Right ventricle myocardium inferior (tissue), 1 donor: ENCODE measurements at regions of chr6 and their contacts with region 1.

Region 1: DNA sequence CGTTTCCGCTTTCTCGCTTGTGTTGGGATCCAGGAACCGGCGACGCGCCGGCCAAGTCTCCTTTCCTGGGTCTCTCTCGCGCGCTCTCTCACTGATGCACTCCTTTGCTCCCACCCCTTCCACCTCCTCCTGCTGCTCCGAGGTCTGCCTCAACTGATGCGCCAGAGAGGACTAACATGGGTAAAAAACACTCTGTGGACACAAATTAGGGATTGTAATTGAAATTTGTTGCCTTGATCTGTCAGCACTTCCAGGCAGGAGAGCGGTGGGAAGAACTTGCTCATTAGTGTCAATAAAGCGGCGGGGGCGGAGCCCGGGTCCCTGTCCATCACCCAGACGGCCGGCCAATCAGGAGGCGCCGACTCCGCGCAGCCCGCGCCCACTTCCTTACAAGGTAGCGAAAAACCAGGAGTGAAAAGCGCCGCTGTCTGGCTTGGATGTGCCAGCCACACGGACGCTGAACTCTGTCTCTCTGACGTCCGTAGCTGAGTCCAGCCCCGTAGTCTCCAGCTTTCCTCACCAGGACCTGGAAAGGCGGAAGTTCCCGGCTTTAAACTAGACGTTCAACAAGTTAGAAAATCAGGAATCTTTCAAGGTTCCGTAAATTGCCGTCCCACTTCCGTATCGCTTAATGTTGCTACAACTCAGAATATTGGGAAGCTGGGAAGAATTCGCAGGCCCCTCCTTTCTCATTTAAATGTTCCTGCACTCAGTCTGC is at the start of gene TBX18:
- DNase-seq: peak; percentile 95
- ATAC-seq: peak; percentile 92
- total RNA-seq, gene TBX18: 8.4 TPM

Region 2: DNA sequence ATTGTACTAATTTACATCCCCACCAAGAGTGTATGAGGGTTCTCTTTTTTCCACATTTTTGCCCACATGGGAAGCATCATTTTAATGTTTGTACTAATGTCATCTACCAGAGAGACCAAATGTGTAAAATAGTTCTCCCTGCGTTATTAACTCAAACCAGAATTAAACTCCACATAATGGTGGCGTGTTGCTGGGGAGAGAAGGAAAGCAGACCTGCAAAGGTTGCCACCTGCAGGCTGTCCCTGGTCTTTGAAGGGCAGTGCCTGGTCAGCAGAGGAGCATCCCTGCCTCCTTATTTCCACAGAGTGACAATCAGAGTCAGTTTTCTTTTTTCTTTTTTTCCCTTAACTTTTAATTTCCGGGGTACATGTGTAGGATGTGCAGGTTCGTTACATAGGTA is 214.6 kb before region 1 on chr6:
- intact Hi-C with region 1: loop called (anchors 10 kb)
- DNase-seq: no peak
- ATAC-seq: no peak

Region 3: DNA sequence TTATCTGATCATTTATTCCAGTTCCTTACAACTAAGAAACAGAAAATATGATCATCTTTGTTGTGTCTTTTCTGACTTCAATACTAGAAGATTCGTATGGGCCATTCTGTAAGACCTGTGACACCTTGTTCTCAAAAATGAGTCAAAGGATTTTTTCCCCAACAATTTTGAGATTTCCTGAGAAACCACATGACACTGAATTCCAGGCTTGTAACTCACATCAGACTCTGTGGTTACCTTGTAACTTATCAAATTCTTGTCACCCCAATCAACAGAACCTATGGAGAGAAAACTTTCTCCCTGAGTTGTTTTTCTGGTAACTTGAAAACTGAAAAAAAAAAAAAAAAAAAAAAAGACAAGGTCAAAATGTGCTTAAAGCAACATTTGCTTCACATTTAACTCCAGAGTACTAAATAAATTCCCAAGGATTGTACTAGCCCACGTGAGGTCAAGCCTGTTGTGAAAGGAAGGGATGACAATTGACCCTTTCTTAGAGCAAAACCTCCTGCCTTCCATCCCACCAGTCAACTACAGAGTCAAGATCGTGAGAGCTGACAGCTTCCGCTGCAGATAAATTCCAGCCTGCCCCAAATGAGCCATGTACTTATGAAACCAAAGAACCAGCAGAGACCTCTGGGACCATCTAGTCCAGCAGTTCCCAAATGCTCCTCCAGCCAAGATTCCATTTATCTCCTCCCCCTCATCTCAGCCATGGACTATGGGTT is 140.4 kb before region 1 on chr6:
- intact Hi-C with region 1: loop called (anchors 2 kb)
- DNase-seq: peak; percentile 53
- ATAC-seq: peak; percentile 99

Region 4: DNA sequence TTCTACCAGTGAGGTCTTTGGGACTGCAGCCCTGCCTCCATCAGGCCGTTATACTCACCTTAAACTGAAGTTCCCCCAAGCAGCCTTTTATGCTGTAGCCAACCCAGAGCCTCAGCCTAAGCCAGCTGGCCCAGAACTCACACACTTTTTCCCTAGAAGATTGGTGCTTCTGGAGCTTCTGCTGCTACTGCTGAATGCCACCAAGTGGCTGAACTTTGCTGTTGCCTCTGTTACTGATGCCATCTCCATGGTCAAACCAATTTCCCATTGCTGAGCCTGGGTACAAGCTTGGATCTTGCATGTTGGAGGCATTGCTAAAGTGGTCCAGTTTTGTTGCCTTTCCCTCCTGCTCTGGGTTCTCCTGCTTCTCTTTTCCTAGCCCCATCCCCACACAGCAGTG is 14.9 kb after region 1 on chr6:
- intact Hi-C with region 1: no loop called
- DNase-seq: no peak
- ATAC-seq: no peak